ENCODE measurements at regions of chr17 and their contacts with region 1.

Region 1: DNA sequence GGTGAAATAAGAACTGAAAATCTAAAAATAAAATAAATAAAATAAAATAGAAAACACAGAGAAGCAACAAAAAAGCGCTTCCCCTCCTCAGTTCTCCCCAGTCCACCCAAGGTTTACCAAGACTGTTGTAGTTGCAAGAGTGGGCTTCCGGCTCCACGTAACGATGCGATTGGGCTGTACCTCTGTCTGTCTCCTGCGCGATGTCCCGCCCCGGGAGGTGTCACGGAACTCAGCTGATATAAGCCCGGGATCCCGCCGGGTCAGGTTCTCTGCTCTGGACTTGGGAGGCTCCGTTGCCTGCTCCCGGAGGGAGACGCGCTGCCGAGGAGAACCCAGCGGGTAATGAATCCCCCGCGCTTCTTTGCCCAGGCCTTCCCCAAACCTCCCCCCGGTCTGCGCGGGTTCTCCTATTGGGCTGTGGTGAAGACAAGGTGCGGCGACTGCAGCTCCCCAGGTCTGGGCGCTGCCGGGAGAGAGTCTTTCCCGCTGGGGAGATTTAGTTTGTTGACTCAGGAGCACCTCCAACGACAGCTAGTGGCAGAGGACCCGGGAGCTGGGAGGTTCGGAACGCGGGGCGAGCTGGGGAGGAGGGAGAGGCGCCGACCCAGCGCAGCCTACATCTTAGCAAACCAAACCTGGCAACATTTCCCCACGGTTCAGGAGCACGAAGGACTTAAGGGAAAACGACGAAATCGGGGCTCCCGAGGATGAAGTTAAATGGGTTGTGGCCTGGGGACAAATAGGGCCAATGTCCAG is at the start of gene SLFN5:
- DNase-seq: peak; percentile 96
- H3K4me3 Mint-ChIP-seq: peak within 1 kb of the TSS; percentile 96
- H3K27ac Mint-ChIP-seq: peak within 1 kb of the TSS; percentile 99
- H3K4me1 Mint-ChIP-seq: peaks cover 68% of the 10 kb centered on the region
- H3K27me3 Mint-ChIP-seq: no peaks in the 10 kb centered on the region
- total RNA-seq, gene SLFN5: 51.2 to 52.0 TPM

Region 2: DNA sequence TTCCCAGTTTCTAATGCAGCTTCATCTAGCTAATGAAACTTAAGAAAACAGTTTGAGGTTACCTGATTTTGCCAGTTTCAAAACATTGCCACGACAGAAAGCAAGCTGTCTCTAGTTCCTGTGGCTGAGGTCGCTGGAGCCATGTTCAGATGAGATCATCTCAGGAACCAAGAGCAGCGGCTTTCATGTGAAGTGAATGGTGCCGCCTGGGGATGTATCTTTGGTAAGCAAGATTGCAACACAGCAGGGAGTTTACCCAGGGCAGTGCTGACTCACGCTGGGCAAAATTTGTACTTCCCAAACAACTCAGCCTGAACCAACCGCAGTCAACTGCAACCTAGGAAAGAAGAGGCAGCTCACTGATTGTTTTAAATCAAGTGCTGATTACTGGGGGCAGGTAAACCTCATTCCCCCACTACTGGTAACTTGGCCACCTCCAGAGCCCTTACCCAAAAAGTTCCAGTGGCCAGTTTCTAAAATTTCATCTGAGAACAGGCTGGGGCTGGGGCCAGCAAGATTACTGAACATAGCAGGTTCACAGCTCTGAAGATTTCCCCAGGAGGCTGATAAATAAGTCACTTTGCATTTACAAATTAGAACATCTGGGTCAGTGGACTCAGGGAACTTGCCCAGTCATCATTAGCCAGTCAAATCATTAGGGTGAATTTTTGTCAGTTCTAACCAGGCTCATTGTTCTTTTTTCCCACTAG is 179.3 kb before region 1 on chr17 and contains the start of gene RFFL:
- CTCF ChIA-PET with region 1: no interaction called
- POLR2A ChIA-PET with region 1: interaction called, 5 read pairs
- intact Hi-C with region 1: loop called (anchors 1 kb)
- DNase-seq: peak; percentile 95
- H3K4me3 Mint-ChIP-seq: peak within 1 kb of the TSS; percentile 35
- H3K27ac Mint-ChIP-seq: peak within 1 kb of the TSS; percentile 76
- H3K4me1 Mint-ChIP-seq: peaks cover 65% of the 10 kb centered on the region
- H3K27me3 Mint-ChIP-seq: no peaks in the 10 kb centered on the region
- total RNA-seq, gene RFFL: 30.5 to 32.8 TPM

Region 3: DNA sequence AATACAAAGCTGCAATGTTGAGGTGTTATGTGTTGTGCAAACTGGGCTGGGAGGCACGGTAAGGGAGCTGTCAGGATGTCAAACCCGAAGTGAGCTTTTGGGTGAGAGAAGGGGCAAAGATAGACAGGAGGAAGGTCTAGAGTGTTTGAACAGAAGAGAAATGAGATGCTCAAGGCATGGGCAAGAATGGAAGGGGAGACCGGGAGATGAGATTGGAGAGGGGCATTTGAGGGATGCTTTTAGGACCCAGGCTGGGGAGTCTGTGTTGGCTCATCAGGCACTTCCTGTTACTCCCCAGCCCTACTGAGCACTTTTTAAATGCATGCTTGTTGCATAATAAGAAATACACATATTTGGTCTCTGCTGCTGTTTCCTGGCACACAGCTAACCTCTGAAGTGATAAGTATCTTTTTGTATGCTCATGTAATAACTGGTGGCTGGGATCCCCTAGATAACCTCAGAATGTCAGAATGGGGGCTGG is 81.7 kb before region 1 on chr17:
- CTCF ChIA-PET with region 1: interaction called, 3 read pairs
- POLR2A ChIA-PET with region 1: interaction called, 3 read pairs
- intact Hi-C with region 1: loop called (anchors 2 kb)
- DNase-seq: peak; percentile 26
- H3K4me3 Mint-ChIP-seq: peak overlapping the region; percentile 28
- H3K27ac Mint-ChIP-seq: peak overlapping the region; percentile 46
- H3K4me1 Mint-ChIP-seq: peaks cover 52% of the 10 kb centered on the region
- H3K27me3 Mint-ChIP-seq: no peaks in the 10 kb centered on the region

Region 4: GRCh38 chr17:35286120-35286781 is 43.3 kb after region 1 on chr17:
- CTCF ChIA-PET with region 1: no interaction called
- POLR2A ChIA-PET with region 1: no interaction called
- intact Hi-C with region 1: loop called (anchors 5 kb)
- DNase-seq: peak; percentile 35
- H3K4me3 Mint-ChIP-seq: no peak overlapping the region
- H3K27ac Mint-ChIP-seq: peak overlapping the region; percentile 38
- H3K4me1 Mint-ChIP-seq: peaks cover 31% of the 10 kb centered on the region
- H3K27me3 Mint-ChIP-seq: no peaks in the 10 kb centered on the region

Region 5: GRCh38 chr17:35432176-35433074 is 189.4 kb after region 1 on chr17 and contains the start of gene SLFN12:
- CTCF ChIA-PET with region 1: no interaction called
- POLR2A ChIA-PET with region 1: no interaction called
- intact Hi-C with region 1: loop called (anchors 1 kb)
- DNase-seq: peak; percentile 61
- H3K4me3 Mint-ChIP-seq: peak within 1 kb of the TSS; percentile 87
- H3K27ac Mint-ChIP-seq: peak within 1 kb of the TSS; percentile 84
- H3K4me1 Mint-ChIP-seq: peaks cover 41% of the 10 kb centered on the region
- H3K27me3 Mint-ChIP-seq: no peaks in the 10 kb centered on the region
- total RNA-seq, gene SLFN12: 10.0 to 10.7 TPM

Region 6: GRCh38 chr17:35534576-35535093 is 291.7 kb after region 1 on chr17:
- CTCF ChIA-PET with region 1: interaction called, 14 read pairs
- POLR2A ChIA-PET with region 1: interaction called, 33 read pairs
- intact Hi-C with region 1: loop called (anchors 1 kb)
- DNase-seq: no peak
- H3K4me3 Mint-ChIP-seq: peak overlapping the region; percentile 75
- H3K27ac Mint-ChIP-seq: peak overlapping the region; percentile 97
- H3K4me1 Mint-ChIP-seq: peaks cover 48% of the 10 kb centered on the region
- H3K27me3 Mint-ChIP-seq: no peaks in the 10 kb centered on the region

Region 7: DNA sequence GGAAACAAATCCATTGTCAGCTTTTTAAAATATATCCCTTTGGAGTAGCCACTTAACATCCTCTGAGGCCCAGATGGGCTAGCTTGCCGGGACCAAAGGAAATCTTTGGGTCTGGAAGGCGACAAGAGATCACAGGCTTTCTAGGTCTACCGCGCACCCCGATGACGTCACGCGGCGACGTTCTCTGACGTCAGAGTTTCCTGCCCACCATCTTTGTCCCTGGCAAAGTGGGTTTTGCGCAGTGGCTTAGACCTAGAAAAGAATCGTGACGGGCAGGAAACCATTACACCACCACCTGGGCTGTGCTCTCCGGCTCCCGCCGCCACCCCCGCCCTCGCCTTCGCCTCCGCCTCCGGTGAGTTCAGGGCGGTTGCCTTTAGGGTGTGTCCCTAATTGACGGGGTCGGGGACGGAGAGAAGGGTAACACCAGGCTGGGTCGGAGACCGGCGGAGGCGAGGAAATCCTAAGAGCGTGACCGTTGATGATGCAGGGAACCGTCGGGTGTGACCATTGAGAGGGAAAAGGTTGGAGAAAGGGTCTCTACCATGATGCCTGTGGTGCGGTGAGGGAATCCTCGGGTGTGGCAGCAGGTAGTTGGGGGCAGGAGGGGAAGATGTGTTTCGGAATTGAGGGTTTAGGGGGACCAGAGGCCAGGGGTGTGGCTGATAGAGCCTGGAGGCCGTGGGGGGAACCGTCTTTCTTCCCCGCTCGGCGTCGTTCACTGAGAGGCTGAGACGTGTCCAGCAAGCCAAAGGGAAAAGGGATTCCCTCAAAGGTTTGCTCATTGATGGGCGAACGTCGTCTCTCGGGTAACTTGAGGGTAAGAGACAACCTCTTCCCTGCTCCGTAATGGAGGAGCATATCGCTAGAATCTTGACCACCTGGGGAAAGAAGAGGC is 344.3 kb after region 1 on chr17 and contains the start of gene AP2B1:
- CTCF ChIA-PET with region 1: no interaction called
- POLR2A ChIA-PET with region 1: no interaction called
- intact Hi-C with region 1: loop called (anchors 2 kb)
- DNase-seq: peak; percentile 98
- H3K4me3 Mint-ChIP-seq: peak within 1 kb of the TSS; percentile 93
- H3K27ac Mint-ChIP-seq: peak within 1 kb of the TSS; percentile 97
- H3K4me1 Mint-ChIP-seq: peaks cover 23% of the 10 kb centered on the region
- H3K27me3 Mint-ChIP-seq: no peaks in the 10 kb centered on the region
- total RNA-seq, gene AP2B1: 187 to 192 TPM